SK-N-SH (cell line): ENCODE measurements at regions of chr16 and their contacts with region 1.

Region 1: GRCh38 chr16:24041826-24042631 is 206.2 kb downstream of the PRKCB start:
- DNase-seq: peak; percentile 75
- H3K4me3 ChIP-seq: peak overlapping the region in 1 of 2 experiments; percentile 48; a peak in 1 of 4 replicates
- H3K27ac ChIP-seq: no peak overlapping the region
- H3K4me1 ChIP-seq: no peaks in the 10 kb centered on the region; a peak in 1 of 4 replicates
- H3K27me3 ChIP-seq: no peaks in the 10 kb centered on the region
- CTCF ChIP-seq: peak; percentile 85
- EP300 ChIP-seq: no peak
- RAD21 ChIP-seq: peak; percentile 86

Region 2: GRCh38 chr16:23803591-23804123 is 238.4 kb before region 1 on chr16:
- CTCF ChIA-PET with region 1: interaction called, 36 read pairs
- POLR2A ChIA-PET with region 1: interaction called, 5 read pairs
- DNase-seq: peak; percentile 66
- H3K4me3 ChIP-seq: peak overlapping the region in 1 of 2 experiments; percentile 1; a peak in 1 of 4 replicates
- H3K27ac ChIP-seq: no peak overlapping the region
- H3K4me1 ChIP-seq: peaks cover 0 to 5% of the 10 kb centered on the region in 2 experiments; a peak in 1 of 4 replicates
- H3K27me3 ChIP-seq: no peaks in the 10 kb centered on the region; the same call in 1 of the 2 replicates
- CTCF ChIP-seq: peak; percentile 55
- EP300 ChIP-seq: no peak
- RAD21 ChIP-seq: peak; percentile 59

Region 3: GRCh38 chr16:24062270-24062817 is 20.3 kb after region 1 on chr16:
- CTCF ChIA-PET with region 1: interaction called, 33 read pairs
- POLR2A ChIA-PET with region 1: no interaction called
- DNase-seq: no peak
- H3K4me3 ChIP-seq: no peak overlapping the region
- H3K27ac ChIP-seq: no peak overlapping the region
- H3K4me1 ChIP-seq: no peaks in the 10 kb centered on the region
- H3K27me3 ChIP-seq: no peaks in the 10 kb centered on the region
- CTCF ChIP-seq: no peak
- EP300 ChIP-seq: no peak
- RAD21 ChIP-seq: no peak

Region 4: GRCh38 chr16:24174977-24175376 is 132.9 kb after region 1 on chr16:
- CTCF ChIA-PET with region 1: no interaction called
- POLR2A ChIA-PET with region 1: no interaction called
- DNase-seq: no peak
- H3K4me3 ChIP-seq: no peak overlapping the region
- H3K27ac ChIP-seq: no peak overlapping the region
- H3K4me1 ChIP-seq: no peaks in the 10 kb centered on the region
- H3K27me3 ChIP-seq: no peaks in the 10 kb centered on the region
- CTCF ChIP-seq: no peak
- EP300 ChIP-seq: no peak
- RAD21 ChIP-seq: no peak

Region 5: GRCh38 chr16:24246911-24247607 is 205.0 kb after region 1 on chr16:
- CTCF ChIA-PET with region 1: interaction called, 223 read pairs
- POLR2A ChIA-PET with region 1: no interaction called
- DNase-seq: no peak
- H3K4me3 ChIP-seq: no peak overlapping the region
- H3K27ac ChIP-seq: no peak overlapping the region
- H3K4me1 ChIP-seq: no peaks in the 10 kb centered on the region
- H3K27me3 ChIP-seq: no peaks in the 10 kb centered on the region
- CTCF ChIP-seq: no peak
- EP300 ChIP-seq: no peak
- RAD21 ChIP-seq: no peak

Region 6: GRCh38 chr16:24504472-24505345 is 462.7 kb after region 1 on chr16:
- CTCF ChIA-PET with region 1: interaction called, 172 read pairs
- POLR2A ChIA-PET with region 1: no interaction called
- DNase-seq: peak; percentile 64
- H3K4me3 ChIP-seq: peak overlapping the region in 1 of 2 experiments; percentile 49; a peak in 1 of 4 replicates
- H3K27ac ChIP-seq: no peak overlapping the region
- H3K4me1 ChIP-seq: peaks cover 0 to 4% of the 10 kb centered on the region in 2 experiments; a peak in 1 of 4 replicates
- H3K27me3 ChIP-seq: no peaks in the 10 kb centered on the region
- CTCF ChIP-seq: peak; percentile 80
- EP300 ChIP-seq: no peak
- RAD21 ChIP-seq: peak; percentile 91